ENCODE measurements at regions of chr22 and their contacts with region 1.

Region 1: DNA sequence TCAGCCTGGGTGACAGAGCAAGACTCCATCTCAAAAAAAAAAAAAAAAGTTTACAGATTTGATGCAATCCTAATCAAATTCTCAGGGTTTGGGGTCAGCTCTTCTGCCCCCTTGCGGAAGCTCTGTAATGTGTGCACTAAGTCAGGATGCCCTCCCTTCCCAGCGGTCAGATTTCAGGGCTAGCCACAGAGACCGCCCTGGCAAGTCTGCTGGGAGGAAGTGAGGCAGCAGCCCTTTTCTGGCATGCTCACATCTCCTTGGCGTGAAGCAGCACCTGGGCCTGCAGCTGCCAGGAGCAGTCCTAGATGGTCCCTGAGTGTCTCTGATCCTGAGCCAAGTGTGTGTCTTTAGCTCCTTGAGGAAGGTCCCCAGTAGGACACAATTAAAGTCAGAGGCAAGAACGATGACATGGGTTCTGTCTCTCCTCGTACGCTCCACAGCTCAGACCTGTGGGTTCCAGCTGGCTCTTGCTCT is 10.9 kb upstream of the APOBEC3C start:
- DNase-seq: peak; percentile 88
- H3K4me3 ChIP-seq: peak overlapping the region; percentile 1
- H3K27ac ChIP-seq: peak overlapping the region; percentile 63
- H3K4me1 ChIP-seq: peaks cover 21% of the 10 kb centered on the region
- CTCF ChIP-seq: peak; percentile 86

Region 2: DNA sequence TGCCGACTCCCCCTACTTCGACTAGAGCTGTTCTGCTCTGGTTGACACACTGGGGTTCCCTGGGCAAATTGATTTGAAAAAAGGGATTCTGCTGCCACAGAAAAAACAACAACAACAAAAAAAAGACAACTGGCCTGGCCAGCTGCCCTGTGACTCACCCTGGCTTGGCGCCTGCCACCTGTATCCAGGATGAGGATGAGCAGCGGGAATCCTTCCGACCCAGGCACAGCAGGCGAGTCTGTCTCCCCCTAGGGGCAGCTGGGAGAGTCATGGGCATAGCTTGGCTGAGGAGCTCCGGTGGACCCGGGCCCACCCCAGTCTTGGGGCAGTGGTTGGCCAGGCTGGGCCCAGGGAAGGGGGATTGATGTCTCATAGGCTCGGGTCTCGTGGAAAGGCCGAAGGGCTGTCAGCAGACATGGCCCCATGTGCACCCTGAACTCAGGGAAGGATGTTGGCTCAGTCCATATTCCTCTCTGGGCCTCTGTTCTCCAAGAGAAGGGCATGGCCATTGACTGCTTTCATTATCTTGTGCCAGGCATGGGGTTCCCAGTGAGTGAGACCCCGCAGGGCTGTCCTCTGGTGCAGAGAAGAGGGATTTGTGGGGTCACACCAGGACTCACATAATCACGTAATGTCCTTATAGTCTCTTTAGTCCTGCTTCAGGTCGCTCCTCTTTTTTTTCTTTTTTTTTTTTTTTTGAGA is 237.0 kb before region 1 on chr22:
- CTCF ChIA-PET with region 1: no interaction called
- POLR2A ChIA-PET with region 1: no interaction called
- intact Hi-C with region 1: loop called (anchors 1 kb)
- DNase-seq: peak; percentile 26
- H3K4me3 ChIP-seq: no peak overlapping the region
- H3K27ac ChIP-seq: no peak overlapping the region
- H3K4me1 ChIP-seq: no peaks in the 10 kb centered on the region
- CTCF ChIP-seq: peak; percentile 82

Region 3: GRCh38 chr22:38973289-38974169 is 29.7 kb before region 1 on chr22:
- CTCF ChIA-PET with region 1: interaction called, 3 read pairs
- POLR2A ChIA-PET with region 1: interaction called, 5 read pairs
- intact Hi-C with region 1: loop called (anchors 1 kb)
- DNase-seq: peak; percentile 75
- H3K4me3 ChIP-seq: no peak overlapping the region
- H3K27ac ChIP-seq: no peak overlapping the region
- H3K4me1 ChIP-seq: peaks cover 6% of the 10 kb centered on the region
- CTCF ChIP-seq: peak; percentile 91

Region 4: GRCh38 chr22:38981992-38982927 is 20.9 kb before region 1 on chr22 and contains the start of gene APOBEC3B:
- CTCF ChIA-PET with region 1: no interaction called
- POLR2A ChIA-PET with region 1: interaction called, 5 read pairs
- intact Hi-C with region 1: loop called (anchors 1 kb)
- DNase-seq: peak; percentile 47
- H3K4me3 ChIP-seq: no peak within 1 kb of the TSS
- H3K27ac ChIP-seq: no peak within 1 kb of the TSS
- H3K4me1 ChIP-seq: peaks cover 33% of the 10 kb centered on the region
- CTCF ChIP-seq: no peak
- total RNA-seq, gene APOBEC3B: 0.49 and 1.7 TPM in 2 replicates

Region 5: DNA sequence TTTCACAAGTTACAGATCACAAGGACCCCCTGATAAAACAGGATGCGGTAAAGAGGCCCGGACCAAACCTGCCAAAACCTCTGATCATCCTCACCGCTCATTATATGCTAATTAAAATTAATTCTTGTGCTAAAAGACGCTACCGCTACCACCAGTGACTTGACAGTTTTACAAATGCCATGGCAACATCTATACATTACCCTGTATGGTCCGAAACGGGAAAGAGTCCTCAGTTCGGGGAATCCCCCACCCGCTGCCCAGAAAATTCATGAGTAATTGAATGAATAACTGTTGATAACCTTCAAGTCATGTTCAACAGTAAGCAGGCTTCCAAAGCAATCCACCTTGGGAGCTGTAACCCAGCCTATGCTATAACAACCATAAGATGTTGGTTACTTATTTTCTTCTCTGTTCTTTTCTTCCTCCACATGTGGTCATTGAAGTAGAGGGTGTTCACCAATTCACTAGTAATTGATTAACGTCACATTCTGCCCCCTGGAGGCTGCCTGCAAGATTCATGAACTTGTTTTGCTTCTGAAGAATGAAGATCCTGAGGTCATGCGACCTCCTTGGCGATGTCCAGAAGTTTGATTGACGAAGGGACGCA is 114.5 kb after region 1 on chr22:
- CTCF ChIA-PET with region 1: no interaction called
- POLR2A ChIA-PET with region 1: no interaction called
- intact Hi-C with region 1: loop called (anchors 1 kb)
- DNase-seq: peak; percentile 84
- H3K4me3 ChIP-seq: peak overlapping the region; percentile 43
- H3K27ac ChIP-seq: peak overlapping the region; percentile 46
- H3K4me1 ChIP-seq: peaks cover 50% of the 10 kb centered on the region
- CTCF ChIP-seq: peak; percentile 90

Region 6: DNA sequence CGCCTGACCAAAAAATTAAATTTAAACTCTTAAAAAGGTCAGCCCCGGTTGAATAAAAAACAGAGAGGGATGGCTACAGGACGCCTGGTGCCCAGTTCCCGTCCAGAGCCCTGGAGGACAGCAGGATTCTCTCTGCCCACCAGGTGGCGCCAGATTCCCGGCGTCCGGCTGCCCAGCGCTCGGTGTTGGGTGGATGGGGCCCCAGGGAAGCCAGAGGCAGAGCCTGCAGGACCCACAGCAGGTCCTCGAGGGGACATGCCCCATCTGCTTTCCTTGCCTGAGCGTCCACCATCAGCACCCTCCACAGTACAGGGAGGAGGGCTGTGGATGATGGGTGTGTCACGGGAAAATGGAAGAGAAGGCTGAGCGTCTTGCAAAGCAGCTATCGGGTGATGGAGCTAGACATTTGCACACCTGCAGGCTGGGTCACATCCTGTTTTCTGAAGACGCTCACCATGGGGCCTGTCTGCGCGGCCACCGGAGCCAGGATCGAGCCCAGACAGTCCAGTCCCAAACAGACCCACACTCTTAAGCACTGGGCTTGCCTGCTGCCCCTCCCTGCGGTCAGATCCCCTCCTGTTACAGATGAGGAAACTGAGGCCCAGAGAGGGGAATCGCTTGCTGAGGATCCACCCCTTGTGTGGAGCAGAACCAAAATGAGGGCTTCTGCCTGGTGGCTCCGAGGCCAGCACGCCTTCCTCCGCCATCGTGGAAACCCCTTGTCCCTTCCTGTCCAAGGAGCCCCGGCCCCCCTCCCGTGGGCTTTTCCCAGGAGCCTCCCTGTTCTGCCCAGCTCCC is 167.8 kb after region 1 on chr22:
- CTCF ChIA-PET with region 1: no interaction called
- POLR2A ChIA-PET with region 1: no interaction called
- intact Hi-C with region 1: no loop called
- DNase-seq: peak; percentile 91
- H3K4me3 ChIP-seq: peak overlapping the region; percentile 48
- H3K27ac ChIP-seq: peak overlapping the region; percentile 91
- H3K4me1 ChIP-seq: peaks cover 67% of the 10 kb centered on the region
- CTCF ChIP-seq: peak; percentile 97